HepG2 (cell line): ENCODE measurements at regions of chr5 and their contacts with region 1.

Region 1: GRCh38 chr5:147835386-147835798 is 3.9 kb upstream of the SPINK1 start:
- DNase-seq: peak; percentile 94
- ATAC-seq: peak; percentile 97
- H3K4me3 ChIP-seq: no peak overlapping the region
- H3K27ac ChIP-seq: no peak overlapping the region
- H3K4me1 ChIP-seq: peaks cover 58% of the 10 kb centered on the region
- H3K27me3 ChIP-seq: peaks cover 0 to 23% of the 10 kb centered on the region in 2 experiments; a peak in 3 of 5 replicates
- CTCF ChIP-seq: no peak
- EP300 ChIP-seq: peak; percentile 95 to 97
- POLR2A ChIP-seq: no peak
- RAD21 ChIP-seq: no peak

Region 2: DNA sequence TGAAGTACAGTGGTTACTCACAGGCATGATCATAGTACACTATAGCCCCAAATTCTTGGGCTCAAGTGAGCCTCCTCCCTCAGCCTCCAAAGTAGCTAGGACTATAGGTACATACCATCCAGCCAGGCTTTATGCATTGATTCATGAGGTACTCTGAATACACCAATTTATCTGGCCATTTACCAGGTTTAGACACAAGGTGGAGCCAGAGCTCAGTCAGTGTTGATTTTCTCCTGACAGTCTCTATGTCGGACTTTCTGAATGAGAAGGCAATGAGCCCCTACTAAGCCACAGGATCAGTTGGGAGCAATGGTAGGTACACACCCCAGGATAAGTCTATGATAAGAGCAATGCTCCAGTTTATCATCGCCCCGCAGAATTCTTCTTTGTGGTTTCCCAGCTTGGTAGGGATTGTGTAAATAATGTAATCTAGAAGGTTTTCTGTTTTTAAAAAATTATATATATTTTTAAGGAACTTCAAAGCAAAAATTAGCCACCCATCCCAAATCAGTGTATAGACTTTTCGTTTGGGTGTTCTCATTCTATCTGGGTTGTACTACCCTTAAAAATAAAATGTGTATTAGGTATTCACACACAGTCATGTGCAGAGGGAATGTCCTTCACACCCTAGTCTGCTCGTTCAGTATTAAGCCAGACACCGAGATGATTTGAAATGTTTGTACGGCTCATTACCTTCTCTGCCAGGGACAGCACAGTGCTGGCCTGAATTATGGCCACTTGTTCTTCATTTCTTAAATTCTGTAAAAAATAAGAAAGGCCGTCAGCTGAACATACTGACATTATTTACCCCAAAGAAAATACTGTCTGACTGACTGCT is 207.1 kb before region 1 on chr5:
- CTCF ChIA-PET with region 1: no interaction called
- POLR2A ChIA-PET with region 1: no interaction called
- in situ Hi-C with region 1: no loop called
- intact Hi-C with region 1: loop called (anchors 5 kb)
- DNase-seq: peak; percentile 65
- ATAC-seq: peak; percentile 92
- H3K4me3 ChIP-seq: no peak overlapping the region
- H3K27ac ChIP-seq: no peak overlapping the region
- H3K4me1 ChIP-seq: no peaks in the 10 kb centered on the region
- H3K27me3 ChIP-seq: no peaks in the 10 kb centered on the region
- CTCF ChIP-seq: peak; percentile 93
- EP300 ChIP-seq: no peak
- POLR2A ChIP-seq: no peak
- RAD21 ChIP-seq: peak; percentile 84

Region 3: DNA sequence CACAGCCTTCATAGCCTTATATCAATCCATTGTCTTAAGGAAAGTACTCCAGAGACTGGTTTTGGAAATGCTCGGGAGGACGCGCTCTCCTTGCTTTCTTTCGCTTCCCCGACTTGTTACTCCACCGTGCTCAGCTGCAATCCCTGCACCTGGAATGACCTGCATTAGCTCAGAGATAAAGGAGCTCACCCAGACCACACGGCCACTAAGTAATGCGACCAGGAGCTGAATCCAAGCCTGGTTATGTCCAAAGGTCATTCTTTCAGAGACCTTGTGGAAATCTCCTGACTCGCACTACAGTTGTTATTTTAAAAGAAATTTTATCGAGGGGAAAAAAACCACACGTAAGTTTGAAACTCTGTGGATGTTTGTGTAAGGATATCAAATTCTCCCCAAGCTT is 190.2 kb before region 1 on chr5:
- CTCF ChIA-PET with region 1: no interaction called
- POLR2A ChIA-PET with region 1: no interaction called
- in situ Hi-C with region 1: no loop called
- intact Hi-C with region 1: loop called (anchors 5 kb)
- DNase-seq: peak; percentile 16
- ATAC-seq: peak; percentile 84
- H3K4me3 ChIP-seq: peak overlapping the region in 2 of 3 experiments; percentile 18 to 23; a peak in 2 of 6 replicates
- H3K27ac ChIP-seq: peak overlapping the region; percentile 29
- H3K4me1 ChIP-seq: peaks cover 28% of the 10 kb centered on the region
- H3K27me3 ChIP-seq: 0 out of 5 replicates have a peak, but pooled peaks cover 0 to 4% of the 10 kb centered on the region in 2 experiments
- CTCF ChIP-seq: no peak
- EP300 ChIP-seq: no peak
- POLR2A ChIP-seq: no peak
- RAD21 ChIP-seq: no peak

Region 4: DNA sequence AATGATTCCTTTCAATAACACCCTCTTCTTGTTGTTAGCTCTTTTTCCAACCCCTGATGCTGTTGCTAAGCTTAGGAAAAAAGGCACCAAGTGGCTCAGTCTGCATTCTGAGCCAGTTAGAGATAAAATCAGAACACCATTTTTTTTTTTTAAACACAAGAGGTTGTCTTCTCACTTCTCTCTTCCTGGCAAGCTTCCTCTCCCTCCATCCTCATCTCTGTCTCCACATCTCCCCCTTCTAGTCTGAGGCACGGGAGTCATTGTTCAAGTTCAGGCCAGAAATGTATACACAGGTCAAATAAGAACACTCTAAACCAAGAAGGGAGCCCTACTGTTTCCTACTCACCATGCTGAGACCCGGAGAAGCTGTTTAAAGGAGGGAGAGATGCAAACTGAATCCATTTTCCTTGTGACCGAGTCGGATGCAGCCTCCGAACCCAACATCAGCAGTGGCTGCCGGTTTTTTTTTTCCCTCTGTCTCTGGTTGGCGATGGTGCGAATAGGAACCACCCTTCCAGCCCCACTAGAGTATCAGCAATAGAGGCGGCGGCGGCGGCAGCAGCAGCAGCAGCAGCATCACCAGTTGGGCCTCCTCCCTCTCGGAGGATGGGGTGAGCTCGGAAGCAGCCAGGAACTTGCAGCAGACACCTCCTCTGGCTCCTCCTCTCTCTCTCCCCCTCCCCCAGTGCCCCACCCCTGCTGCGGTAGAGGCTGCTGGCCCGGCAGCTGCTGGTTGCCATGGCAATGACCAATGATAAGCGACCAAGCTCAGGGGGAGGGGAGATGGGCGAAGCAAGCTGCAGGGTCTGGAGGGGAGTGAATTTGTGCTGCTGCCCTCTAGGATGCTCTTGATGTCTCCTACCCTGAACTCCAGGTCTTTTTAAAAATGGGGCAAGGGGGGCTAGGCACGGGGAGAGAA is 53.0 kb before region 1 on chr5 and contains the start of gene JAKMIP2:
- CTCF ChIA-PET with region 1: no interaction called
- POLR2A ChIA-PET with region 1: no interaction called
- in situ Hi-C with region 1: no loop called
- intact Hi-C with region 1: no loop called
- DNase-seq: no peak
- ATAC-seq: no peak
- H3K4me3 ChIP-seq: no peak within 1 kb of the TSS
- H3K27ac ChIP-seq: no peak within 1 kb of the TSS
- H3K4me1 ChIP-seq: no peaks in the 10 kb centered on the region
- H3K27me3 ChIP-seq: no peaks in the 10 kb centered on the region
- CTCF ChIP-seq: no peak
- EP300 ChIP-seq: no peak
- POLR2A ChIP-seq: no peak
- RAD21 ChIP-seq: no peak
- total RNA-seq, gene JAKMIP2: 1.9 and 2.1 TPM in 2 replicates

Region 5: DNA sequence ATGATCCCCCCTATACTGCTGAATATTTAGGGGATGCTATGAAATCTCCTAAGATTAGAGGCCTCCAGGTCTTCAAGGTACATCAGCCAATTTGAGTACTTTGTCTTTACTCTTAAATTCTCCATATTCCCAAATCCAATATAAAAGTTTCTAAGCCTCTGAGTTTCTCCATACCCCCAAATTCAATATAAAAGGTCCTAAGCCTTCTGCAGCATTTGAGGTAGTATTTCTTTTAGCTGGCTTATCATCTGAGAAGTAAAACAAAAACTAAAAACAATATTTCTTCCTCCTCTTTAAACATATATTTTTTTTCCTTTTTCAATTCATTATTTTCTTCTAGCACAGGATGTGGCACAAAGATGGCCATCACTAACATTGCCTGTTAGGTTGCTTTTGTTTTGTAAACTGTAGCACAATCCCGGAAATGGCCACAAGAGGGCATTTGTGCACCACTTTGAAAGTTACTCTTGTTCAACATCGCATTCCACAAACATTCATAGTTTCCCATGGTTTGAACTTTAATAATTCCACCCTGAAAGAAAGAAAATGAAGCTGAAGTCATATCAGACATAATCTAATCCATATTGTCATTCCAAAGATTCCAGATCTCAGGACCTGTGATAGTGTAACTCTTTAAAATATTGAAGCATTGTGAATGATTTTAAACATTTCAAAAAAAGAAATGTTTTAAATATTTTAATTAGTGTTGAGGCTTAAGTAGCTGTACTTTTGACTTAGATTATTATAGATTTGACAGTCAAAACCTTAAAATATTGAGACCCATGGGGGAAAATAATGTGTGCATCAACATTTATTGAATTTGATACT is 22.1 kb after region 1 on chr5:
- CTCF ChIA-PET with region 1: no interaction called
- POLR2A ChIA-PET with region 1: interaction called, 4 read pairs
- in situ Hi-C with region 1: no loop called
- intact Hi-C with region 1: loop called (anchors 1 kb)
- DNase-seq: peak; percentile 44
- ATAC-seq: peak; percentile 60; the same call in 2 of the 3 replicates
- H3K4me3 ChIP-seq: no peak overlapping the region
- H3K27ac ChIP-seq: no peak overlapping the region
- H3K4me1 ChIP-seq: no peaks in the 10 kb centered on the region
- H3K27me3 ChIP-seq: no peaks in the 10 kb centered on the region
- CTCF ChIP-seq: peak; percentile 73
- EP300 ChIP-seq: no peak
- POLR2A ChIP-seq: no peak
- RAD21 ChIP-seq: no peak

Region 6: DNA sequence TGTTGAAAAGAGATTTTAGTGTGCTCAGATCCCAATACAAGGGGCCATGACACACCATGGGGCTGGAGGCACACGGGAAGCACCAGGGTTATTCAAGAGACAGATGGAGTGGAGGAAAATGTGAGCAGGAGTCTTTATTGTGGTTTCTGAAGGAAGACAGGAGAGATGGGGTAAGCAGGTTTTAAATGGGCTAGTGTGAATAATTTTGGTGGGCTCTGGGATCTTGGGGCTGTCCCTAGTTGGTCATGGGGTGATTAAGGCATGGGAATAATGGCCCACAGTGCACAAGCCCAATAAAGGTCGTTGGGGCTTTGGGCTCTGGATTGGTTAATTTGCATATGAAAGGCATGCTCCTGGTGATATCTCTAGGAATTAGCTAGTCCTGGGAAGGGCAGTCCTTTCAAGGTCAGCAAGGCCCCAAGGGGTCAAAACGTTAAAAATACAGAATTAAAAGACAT is 39.5 kb after region 1 on chr5:
- CTCF ChIA-PET with region 1: no interaction called
- POLR2A ChIA-PET with region 1: no interaction called
- in situ Hi-C with region 1: no loop called
- intact Hi-C with region 1: no loop called
- DNase-seq: no peak
- ATAC-seq: no peak
- H3K4me3 ChIP-seq: no peak overlapping the region
- H3K27ac ChIP-seq: no peak overlapping the region
- H3K4me1 ChIP-seq: no peaks in the 10 kb centered on the region
- H3K27me3 ChIP-seq: no peaks in the 10 kb centered on the region; a peak in 1 of 5 replicates
- CTCF ChIP-seq: no peak
- EP300 ChIP-seq: no peak
- POLR2A ChIP-seq: no peak
- RAD21 ChIP-seq: no peak

Region 7: DNA sequence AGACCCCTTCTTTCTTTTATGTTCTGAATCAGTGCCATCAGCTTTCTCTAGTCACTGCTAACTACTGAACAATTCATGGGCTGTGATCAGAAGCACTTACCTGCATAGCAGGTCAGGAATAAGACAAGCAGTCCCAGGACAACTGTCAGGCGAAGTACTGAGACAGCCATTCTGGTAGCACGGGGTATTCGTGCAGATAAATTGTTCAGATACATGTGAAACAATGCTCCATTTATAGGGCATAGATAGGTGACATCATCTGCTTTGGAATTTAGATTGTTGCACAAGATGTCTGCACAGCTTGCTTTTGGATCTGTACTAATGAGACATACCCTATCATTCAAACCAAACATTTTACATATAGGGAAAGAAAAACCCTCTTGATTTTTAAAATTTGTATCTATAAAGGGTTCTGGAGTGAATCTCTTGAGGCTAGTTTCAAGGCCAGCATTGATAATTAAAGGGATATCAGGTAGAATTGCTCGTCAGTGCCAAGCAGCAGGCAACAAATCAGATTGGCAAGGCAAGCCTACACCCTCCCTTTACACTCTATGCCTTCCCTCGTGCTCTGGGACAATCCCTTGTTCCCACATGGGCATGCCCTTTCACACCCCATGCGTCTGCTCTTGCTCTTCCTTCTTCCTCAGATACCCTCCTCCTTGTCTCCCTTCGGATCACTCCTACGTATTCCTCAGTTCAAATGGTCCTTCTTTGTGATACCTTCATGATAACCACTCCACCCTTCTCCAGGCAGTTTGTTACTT is 71.1 kb after region 1 on chr5 and contains the start of gene C5orf46:
- CTCF ChIA-PET with region 1: no interaction called
- POLR2A ChIA-PET with region 1: no interaction called
- in situ Hi-C with region 1: no loop called
- intact Hi-C with region 1: loop called (anchors 1 kb)
- DNase-seq: peak; percentile 46
- ATAC-seq: no peak
- H3K4me3 ChIP-seq: no peak within 1 kb of the TSS
- H3K27ac ChIP-seq: no peak within 1 kb of the TSS
- H3K4me1 ChIP-seq: no peaks in the 10 kb centered on the region
- H3K27me3 ChIP-seq: no peaks in the 10 kb centered on the region
- CTCF ChIP-seq: no peak
- EP300 ChIP-seq: no peak
- POLR2A ChIP-seq: no peak
- RAD21 ChIP-seq: no peak
- total RNA-seq, gene C5orf46: not detected in 2 replicates

Region 8: DNA sequence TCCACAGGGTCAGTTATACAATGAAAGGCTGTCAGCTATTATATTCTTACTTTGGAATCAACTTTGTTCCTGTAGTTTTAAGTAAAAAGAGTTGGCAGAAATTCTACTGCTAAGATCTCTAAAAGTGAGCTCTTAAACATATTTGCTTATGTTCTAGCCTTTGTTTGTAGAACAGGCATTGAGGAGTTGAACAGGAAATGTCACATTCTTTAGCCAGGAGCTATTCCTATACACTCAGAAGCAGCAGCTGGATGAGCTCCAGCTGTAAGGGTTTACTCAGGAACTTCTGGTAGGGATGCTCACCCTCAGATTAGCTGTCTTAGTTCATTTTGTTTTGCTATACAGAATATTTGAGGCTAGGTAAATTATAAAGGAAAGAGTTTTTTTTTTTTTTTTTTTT is 310.5 kb after region 1 on chr5:
- CTCF ChIA-PET with region 1: no interaction called
- POLR2A ChIA-PET with region 1: no interaction called
- in situ Hi-C with region 1: no loop called
- intact Hi-C with region 1: loop called (anchors 10 kb)
- DNase-seq: peak; percentile 77
- ATAC-seq: peak; percentile 83
- H3K4me3 ChIP-seq: no peak overlapping the region
- H3K27ac ChIP-seq: no peak overlapping the region
- H3K4me1 ChIP-seq: peaks cover 35% of the 10 kb centered on the region
- H3K27me3 ChIP-seq: no peaks in the 10 kb centered on the region
- CTCF ChIP-seq: no peak
- EP300 ChIP-seq: peak in 1 of 2 experiments; percentile 60; a peak in 2 of 4 replicates
- POLR2A ChIP-seq: no peak
- RAD21 ChIP-seq: no peak

Region 9: DNA sequence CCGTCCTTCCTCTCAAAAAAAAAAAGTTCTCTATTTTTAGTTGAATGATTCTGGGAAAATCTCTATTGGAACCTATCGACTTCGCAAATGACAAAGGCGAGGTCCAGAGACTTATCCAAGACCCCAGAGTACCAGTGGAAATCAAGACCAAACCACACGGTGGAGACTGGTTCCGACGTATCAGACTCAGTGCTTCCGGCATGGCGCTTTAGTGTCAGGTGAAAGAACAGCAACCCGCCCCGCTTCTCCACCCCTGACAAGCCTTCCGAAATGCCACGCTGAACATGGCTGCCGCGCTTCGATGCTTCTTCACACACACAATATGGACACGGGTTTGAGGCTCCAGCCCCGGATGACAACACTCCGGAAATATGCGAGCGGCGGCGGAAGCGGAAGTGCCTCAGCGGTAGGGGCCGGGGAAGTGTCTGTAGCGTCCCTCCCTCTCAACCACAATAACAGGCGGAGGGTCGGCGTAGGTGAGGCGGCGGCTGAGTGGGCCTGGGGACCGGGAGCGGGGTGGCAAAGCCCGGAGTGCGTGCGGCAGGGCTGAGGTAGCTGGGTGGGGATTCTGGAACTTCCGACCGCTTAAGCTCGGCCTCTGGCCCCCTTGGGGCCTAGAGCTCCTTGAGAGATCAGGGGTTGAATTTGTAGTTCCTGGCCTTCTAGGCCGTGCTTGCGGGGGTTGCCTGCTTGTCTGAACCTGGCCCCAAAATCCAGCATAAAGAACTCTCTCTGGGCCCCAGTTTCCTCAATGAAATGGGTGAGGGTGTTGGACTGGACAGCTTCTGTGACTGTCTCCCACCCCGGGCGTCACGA is 548.4 kb after region 1 on chr5 and contains the start of gene FBXO38:
- CTCF ChIA-PET with region 1: no interaction called
- POLR2A ChIA-PET with region 1: interaction called, 3 read pairs
- in situ Hi-C with region 1: no loop called
- intact Hi-C with region 1: loop called (anchors 5 kb)
- DNase-seq: peak; percentile 97
- ATAC-seq: peak; percentile 99
- H3K4me3 ChIP-seq: peak within 1 kb of the TSS; percentile 73 to 92 (median 80)
- H3K27ac ChIP-seq: peak within 1 kb of the TSS; percentile 85
- H3K4me1 ChIP-seq: peaks cover 43% of the 10 kb centered on the region
- H3K27me3 ChIP-seq: no peaks in the 10 kb centered on the region
- CTCF ChIP-seq: peak; percentile 54
- EP300 ChIP-seq: peak in 1 of 2 experiments; percentile 46; a peak in 1 of 4 replicates
- POLR2A ChIP-seq: peak; percentile 80 to 82
- RAD21 ChIP-seq: 0 out of 2 replicates have a peak, but pooled peaks have one; percentile 10
- total RNA-seq, gene FBXO38: 35.6 and 35.9 TPM in 2 replicates